ENCODE measurements at regions of chr13 and their contacts with region 1.

Region 1: DNA sequence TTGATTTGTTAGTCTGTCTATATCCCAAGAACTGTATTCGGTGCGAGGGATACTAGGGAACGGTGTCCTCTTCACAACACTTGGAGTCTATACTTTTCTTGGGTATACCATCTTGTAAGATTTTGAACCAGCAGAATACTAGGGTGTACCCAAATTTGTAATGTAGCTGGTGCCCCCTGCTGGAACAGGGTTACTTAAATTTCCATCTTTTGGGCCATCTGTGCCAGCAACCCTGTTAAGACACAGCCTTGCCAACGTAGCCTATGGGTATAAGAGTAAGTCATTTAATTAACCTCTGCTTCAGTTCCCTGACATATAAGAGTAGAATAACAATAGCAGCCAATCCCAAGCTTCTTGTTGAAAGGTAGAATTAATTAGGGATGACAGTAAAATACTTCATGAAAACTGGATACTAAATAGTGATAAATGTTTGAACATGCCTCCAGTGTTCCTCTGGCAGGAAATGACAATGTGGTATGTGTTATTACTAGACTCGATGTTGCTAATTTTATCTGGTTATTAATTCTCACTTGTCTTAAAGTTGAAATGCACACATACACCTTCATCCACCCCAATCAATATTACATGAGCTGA is 607.6 kb downstream of the FGF9 start:
- DNase-seq: no peak
- H3K4me3 Mint-ChIP-seq: no peak overlapping the region
- H3K27ac Mint-ChIP-seq: peak overlapping the region; percentile 10
- H3K4me1 Mint-ChIP-seq: peaks cover 6% of the 10 kb centered on the region
- H3K27me3 Mint-ChIP-seq: no peaks in the 10 kb centered on the region
- CTCF ChIP-seq: peak; percentile 62

Region 2: DNA sequence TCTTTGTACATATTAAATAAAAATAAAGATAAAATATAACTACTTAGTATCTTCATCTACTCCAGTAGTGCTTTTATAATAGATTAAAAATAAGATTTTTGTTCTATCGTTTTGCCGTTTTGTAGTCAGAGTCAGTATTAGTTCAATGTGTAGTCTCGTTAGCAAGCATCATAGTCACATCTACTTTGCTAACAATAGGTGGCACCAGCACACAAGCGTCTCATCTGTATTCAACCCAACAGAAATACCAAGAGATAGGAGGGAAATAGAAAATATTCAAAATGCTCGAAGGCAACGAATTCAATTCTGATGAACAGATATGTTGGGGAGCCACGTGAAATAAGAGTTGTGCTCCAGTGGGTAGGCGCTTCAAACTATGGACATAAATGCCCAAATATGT is 653.1 kb before region 1 on chr13:
- CTCF ChIA-PET with region 1: interaction called, 4 read pairs
- POLR2A ChIA-PET with region 1: no interaction called
- intact Hi-C with region 1: loop called (anchors 1 kb)
- DNase-seq: peak; percentile 65
- H3K4me3 Mint-ChIP-seq: no peak overlapping the region
- H3K27ac Mint-ChIP-seq: no peak overlapping the region
- H3K4me1 Mint-ChIP-seq: peaks cover 7% of the 10 kb centered on the region
- H3K27me3 Mint-ChIP-seq: no peaks in the 10 kb centered on the region
- CTCF ChIP-seq: no peak

Region 3: GRCh38 chr13:21849323-21849722 is 429.1 kb before region 1 on chr13:
- CTCF ChIA-PET with region 1: no interaction called
- POLR2A ChIA-PET with region 1: interaction called, 3 read pairs
- intact Hi-C with region 1: loop called (anchors 1 kb)
- DNase-seq: no peak
- H3K4me3 Mint-ChIP-seq: no peak overlapping the region
- H3K27ac Mint-ChIP-seq: no peak overlapping the region
- H3K4me1 Mint-ChIP-seq: no peaks in the 10 kb centered on the region
- H3K27me3 Mint-ChIP-seq: no peaks in the 10 kb centered on the region
- CTCF ChIP-seq: peak; percentile 56

Region 4: DNA sequence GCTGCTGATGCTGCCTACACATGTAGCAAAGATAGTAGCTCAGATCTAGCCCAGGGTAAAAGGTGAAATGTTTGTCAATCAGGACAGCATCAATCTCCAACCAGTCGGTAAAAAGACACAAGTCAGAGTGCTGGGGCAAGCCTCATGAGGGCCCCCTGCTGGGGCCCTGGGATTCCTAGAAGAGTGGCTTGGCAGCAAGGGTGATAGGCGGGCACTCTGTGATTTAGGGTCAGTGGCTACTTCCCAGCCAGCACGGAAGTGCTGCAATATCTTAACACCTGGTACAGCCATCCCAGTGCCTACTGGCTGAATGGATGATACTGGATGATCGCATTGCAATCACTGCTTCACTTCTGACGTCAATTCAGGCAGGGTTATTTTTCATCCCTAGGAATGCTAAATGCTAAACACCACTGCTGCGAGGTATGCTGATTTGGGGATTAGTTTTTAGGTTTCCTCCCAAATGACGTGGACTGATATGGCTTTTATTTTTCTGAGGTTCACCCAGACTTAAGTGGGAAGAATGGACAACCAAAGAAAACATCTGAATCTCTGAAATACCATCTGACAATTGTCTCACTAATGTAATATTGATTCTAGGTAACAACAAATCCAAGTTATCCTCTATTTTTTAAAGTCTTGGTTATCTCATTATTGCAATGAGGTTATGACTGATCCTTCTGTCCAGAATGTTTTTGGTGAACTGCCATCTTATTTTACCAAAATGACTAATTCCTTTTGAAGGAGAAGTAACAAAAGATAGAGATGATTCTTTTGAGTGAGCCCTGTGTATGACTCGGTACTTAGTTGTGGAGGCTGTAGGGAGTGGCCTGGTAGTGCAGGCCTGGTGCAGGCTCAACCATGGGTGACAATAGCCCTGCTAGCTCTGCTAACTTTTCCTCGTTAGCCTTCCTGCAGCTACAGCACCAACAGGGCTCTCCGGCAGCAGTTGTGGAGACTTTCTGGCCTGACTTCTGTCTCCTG is 175.1 kb before region 1 on chr13:
- CTCF ChIA-PET with region 1: no interaction called
- POLR2A ChIA-PET with region 1: no interaction called
- intact Hi-C with region 1: no loop called
- DNase-seq: no peak
- H3K4me3 Mint-ChIP-seq: no peak overlapping the region
- H3K27ac Mint-ChIP-seq: no peak overlapping the region
- H3K4me1 Mint-ChIP-seq: peaks cover 15% of the 10 kb centered on the region
- H3K27me3 Mint-ChIP-seq: peaks cover 41% of the 10 kb centered on the region
- CTCF ChIP-seq: no peak